B cell (primary cell): ENCODE measurements at regions of chr14 and their contacts with region 1.

Region 1: DNA sequence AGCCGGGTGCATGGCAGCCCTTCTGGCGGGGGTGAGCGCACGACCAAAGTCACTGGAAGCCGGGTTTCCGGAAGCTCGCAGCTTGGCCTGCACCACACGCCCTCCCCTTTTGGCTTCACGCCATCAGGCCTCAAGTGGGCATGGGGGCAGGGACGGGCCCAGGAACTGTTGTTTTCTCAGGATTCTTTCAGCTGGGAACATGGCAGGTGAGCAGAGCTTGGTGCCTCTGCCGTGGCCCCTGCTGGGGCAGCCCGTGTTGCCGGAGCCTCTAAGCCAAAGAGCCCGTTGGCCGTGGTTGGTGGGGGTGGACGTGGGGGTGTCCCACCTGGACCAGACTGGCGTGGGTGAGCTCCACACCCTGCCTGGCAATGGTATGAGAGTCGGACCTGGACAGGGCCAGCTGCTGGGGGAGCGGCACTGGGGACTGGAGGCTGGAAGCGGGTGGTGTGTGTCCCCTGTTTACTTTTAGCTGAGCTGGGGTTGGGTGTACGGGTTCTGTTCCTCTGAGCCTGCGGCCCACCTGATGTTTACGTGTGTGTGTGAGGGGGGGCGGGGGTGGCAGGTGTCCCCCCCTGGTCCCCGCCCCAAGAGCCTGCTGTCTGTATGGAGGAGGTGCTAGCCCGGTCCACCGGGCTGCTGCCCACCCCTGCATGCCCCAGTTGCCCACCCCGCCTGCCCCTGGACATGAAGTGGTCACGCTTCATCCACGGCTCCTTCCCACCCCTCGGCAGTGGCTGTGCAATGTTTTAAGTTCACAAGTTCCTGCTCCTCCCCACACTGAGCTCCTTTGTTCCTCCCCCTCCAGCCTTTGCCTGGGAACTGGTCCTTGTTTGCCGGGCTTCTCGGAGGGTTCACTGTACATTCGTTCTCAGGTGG is 28.7 kb upstream of the PLD4 start:
- DNase-seq: peak; percentile 18
- ATAC-seq: no peak
- H3K4me3 ChIP-seq: no peak overlapping the region
- H3K4me3 Mint-ChIP-seq: no peak overlapping the region
- H3K27ac ChIP-seq: no peak overlapping the region
- H3K27ac Mint-ChIP-seq: no peak overlapping the region
- H3K4me1 ChIP-seq: peaks cover 0 to 5% of the 10 kb centered on the region in 2 donors
- H3K4me1 Mint-ChIP-seq: peaks cover 4% of the 10 kb centered on the region
- H3K27me3 ChIP-seq: peaks cover 0 to 4% (median 0%) of the 10 kb centered on the region in 4 experiments
- H3K27me3 Mint-ChIP-seq: peaks cover 5% of the 10 kb centered on the region
- CTCF ChIP-seq: no peak

Region 2: GRCh38 chr14:104926619-104927431 is 30.8 kb after region 1 on chr14:
- CTCF ChIA-PET with region 1: interaction called, 17 read pairs
- POLR2A ChIA-PET with region 1: interaction called, 8 read pairs
- intact Hi-C with region 1: loop called (anchors 1 kb)
- DNase-seq: peak; percentile 89
- ATAC-seq: peak; percentile 61
- H3K4me3 ChIP-seq: peak overlapping the region; percentile 8 to 74 (median 56)
- H3K4me3 Mint-ChIP-seq: peak overlapping the region; percentile 86
- H3K27ac ChIP-seq: peak overlapping the region; percentile 81 to 84
- H3K27ac Mint-ChIP-seq: peak overlapping the region; percentile 90
- H3K4me1 ChIP-seq: peaks cover 52 to 60% of the 10 kb centered on the region in 2 donors
- H3K4me1 Mint-ChIP-seq: peaks cover 63% of the 10 kb centered on the region
- H3K27me3 ChIP-seq: no peaks in the 10 kb centered on the region
- H3K27me3 Mint-ChIP-seq: no peaks in the 10 kb centered on the region
- CTCF ChIP-seq: no peak

Region 3: GRCh38 chr14:104932676-104933631 is 36.9 kb after region 1 on chr14:
- CTCF ChIA-PET with region 1: interaction called, 34 read pairs
- POLR2A ChIA-PET with region 1: interaction called, 3 read pairs
- intact Hi-C with region 1: loop called (anchors 1 kb)
- DNase-seq: peak; percentile 86
- ATAC-seq: peak; percentile 94
- H3K4me3 ChIP-seq: peak overlapping the region in 3 of 5 experiments; percentile 39 to 54 (median 42)
- H3K4me3 Mint-ChIP-seq: peak overlapping the region; percentile 63
- H3K27ac ChIP-seq: no peak overlapping the region
- H3K27ac Mint-ChIP-seq: no peak overlapping the region
- H3K4me1 ChIP-seq: peaks cover 3 to 21% of the 10 kb centered on the region in 2 donors
- H3K4me1 Mint-ChIP-seq: peaks cover 18% of the 10 kb centered on the region
- H3K27me3 ChIP-seq: peaks cover 0 to 7% (median 2%) of the 10 kb centered on the region in 4 experiments
- H3K27me3 Mint-ChIP-seq: peaks cover 4% of the 10 kb centered on the region
- CTCF ChIP-seq: peak; percentile 69

Region 4: GRCh38 chr14:104976198-104977007 is 80.4 kb after region 1 on chr14:
- CTCF ChIA-PET with region 1: interaction called, 5 read pairs
- POLR2A ChIA-PET with region 1: no interaction called
- intact Hi-C with region 1: loop called (anchors 2 kb)
- DNase-seq: peak; percentile 87
- ATAC-seq: peak; percentile 77
- H3K4me3 ChIP-seq: no peak overlapping the region
- H3K4me3 Mint-ChIP-seq: peak overlapping the region; percentile 82
- H3K27ac ChIP-seq: no peak overlapping the region
- H3K27ac Mint-ChIP-seq: peak overlapping the region; percentile 38
- H3K4me1 ChIP-seq: peaks cover 20 to 24% of the 10 kb centered on the region in 2 donors
- H3K4me1 Mint-ChIP-seq: peaks cover 12% of the 10 kb centered on the region
- H3K27me3 ChIP-seq: peaks cover 0 to 32% (median 15%) of the 10 kb centered on the region in 4 experiments
- H3K27me3 Mint-ChIP-seq: peaks cover 29% of the 10 kb centered on the region
- CTCF ChIP-seq: peak; percentile 91